Posterior cingulate gyrus (tissue), 11 donors: ENCODE measurements at regions of chr19 and their contacts with region 1.

Region 1: DNA sequence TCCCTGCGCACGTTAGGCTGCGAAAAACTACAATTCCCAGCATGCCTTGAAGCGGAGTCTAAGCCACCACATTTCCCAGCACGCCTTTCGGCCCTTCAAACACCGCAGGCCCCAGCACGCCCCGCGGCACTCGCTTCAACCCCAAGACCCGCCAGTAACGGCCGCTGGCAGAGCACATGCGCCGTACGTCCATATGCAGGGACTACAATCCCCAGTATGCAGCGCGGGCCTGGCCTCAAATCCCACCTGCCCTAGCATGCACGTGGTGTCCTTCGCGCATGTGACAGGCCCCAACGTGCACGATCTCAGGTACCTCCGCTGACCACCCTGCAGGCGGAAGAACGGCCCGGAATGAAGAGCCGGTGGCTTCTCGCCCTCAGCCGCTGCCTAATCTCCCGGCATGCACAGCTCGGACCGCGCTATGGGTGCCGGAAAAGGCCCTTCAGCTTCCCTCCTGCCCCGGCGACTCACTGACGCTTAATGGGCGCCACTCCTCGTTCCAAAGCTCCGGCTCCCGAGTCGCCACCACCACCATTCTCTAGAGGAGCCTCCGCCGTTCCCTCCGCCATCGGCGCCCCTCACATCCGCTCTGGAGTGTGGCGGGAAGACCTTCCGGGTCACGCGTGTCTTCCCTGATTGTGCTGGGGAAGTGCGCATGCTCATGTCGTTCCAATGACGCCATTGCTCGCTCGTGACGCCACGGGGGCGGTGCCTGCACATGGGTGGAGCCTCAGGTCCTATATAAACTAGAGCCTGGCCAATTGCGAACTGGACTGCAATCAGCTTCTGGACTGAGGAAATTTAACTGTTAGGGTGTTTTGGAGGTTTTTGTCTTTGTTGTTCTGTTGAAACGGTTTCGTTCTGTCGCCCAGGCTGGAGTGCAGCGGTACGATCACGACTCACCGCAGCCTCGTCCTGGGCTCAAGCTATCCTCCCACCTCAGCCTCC is at the start of gene DUS3L:
- DNase-seq: peak; percentile 93 to 99 (median 96)

Region 2: DNA sequence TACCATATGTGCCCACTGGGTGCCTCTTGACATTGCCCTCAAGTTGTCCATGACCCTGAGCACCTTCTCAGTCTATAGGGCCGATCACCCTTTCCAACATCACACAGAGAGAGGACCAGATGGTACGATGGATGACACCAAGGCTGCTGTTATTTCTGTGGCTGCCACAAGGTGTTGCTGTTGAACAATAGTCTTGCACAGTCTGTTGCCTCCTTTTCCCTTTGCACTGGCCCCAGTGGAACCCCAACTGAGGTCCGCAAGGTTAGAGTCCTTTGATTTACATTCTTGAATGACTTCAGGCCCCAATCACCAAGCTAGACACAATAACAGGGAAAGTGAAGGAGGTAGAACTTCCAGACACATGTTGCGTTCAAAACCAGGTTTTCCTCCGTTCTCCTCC is 275.1 kb before region 1 on chr19:
- intact Hi-C with region 1: no loop called
- DNase-seq: no peak

Region 3: GRCh38 chr19:5680437-5681368 is 110.1 kb before region 1 on chr19 and contains the starts of genes HSD11B1L and MICOS13:
- intact Hi-C with region 1: loop called (anchors 2 kb)
- DNase-seq: peak; percentile 98 to 100 (median 99)

Region 4: GRCh38 chr19:5719961-5720790 is 70.7 kb before region 1 on chr19 and contains the starts of genes CATSPERD and LONP1:
- intact Hi-C with region 1: loop called (anchors 5 kb)
- DNase-seq: peak; percentile 96 to 100 (median 98)

Region 5: DNA sequence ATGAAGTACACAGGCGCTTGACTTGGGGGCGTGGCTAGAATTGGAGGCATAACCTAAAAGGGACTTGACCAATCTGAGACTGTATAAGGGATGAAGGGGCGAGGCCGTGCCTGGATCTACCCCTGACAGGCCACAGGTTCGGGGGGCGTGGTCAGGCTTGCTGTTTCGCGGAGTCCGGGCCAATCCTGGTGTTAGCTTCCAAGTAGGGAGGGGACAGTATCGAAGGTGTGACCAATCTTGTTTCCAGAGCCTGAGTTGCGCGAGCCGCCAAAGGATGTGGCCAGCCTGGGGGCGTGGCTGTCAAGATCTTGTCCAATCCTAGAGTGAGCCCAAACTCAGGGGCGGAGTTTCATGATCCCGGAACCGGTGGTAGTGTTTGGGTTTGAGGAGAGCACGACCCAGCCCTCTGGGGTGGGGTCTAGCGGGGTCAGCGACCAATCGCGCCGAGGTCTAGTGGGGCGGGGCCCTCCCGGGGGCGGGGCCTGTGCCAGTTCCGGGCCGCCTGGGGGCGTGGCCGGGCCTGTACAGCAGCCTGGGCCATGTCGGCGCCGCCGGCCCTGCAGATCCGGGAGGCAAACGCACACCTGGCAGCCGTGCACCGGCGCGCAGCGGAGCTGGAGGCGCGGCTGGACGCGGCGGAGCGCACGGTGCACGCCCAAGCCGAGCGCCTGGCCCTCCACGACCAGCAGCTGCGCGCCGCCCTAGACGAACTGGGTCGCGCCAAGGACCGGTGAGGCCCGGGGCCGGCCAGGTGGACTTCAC is 113.7 kb after region 1 on chr19 and contains the start of gene VMAC:
- intact Hi-C with region 1: loop called (anchors 5 kb)
- DNase-seq: peak; percentile 98 to 100 (median 99)

Region 6: GRCh38 chr19:5943623-5944022 is 152.8 kb after region 1 on chr19:
- intact Hi-C with region 1: no loop called
- DNase-seq: peak in 2 of 10 donors; percentile 14 to 43